A549 (cell line): ENCODE measurements at regions of chr17 and their contacts with region 1.

Region 1: DNA sequence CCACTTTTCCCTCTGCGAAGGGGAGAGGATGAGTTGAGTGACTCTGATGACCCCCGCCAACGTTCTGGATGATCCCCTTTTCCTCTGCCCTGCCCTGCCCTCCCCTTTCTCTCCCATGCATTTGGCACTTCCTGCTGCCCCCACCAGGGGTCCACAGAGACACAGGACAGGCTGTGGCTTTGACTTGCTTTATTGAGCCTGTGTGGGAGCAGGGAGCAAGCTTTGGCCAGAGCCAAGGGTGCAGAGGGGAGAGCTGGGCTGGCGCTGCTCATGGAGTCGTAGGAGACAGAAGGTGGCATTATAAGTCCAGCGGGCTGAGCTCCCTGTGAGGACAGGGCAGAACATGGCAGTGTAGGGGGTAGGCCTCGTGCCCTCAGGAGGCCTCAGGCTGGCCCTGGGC is 1.6 kb downstream of the PPY start:
- DNase-seq: peak; percentile 57 to 58
- ATAC-seq: peak; percentile 54 to 79
- H3K4me3 ChIP-seq: no peak overlapping the region
- H3K27ac ChIP-seq: no peak overlapping the region
- H3K4me1 ChIP-seq: peaks cover 9% of the 10 kb centered on the region; the same call in 2 of the 3 replicates
- CTCF ChIP-seq: peak; percentile 37
- EP300 ChIP-seq: no peak
- POLR2A ChIP-seq: no peak
- RAD21 ChIP-seq: peak; percentile 34 to 56; a peak in 3 of 5 replicates

Region 2: DNA sequence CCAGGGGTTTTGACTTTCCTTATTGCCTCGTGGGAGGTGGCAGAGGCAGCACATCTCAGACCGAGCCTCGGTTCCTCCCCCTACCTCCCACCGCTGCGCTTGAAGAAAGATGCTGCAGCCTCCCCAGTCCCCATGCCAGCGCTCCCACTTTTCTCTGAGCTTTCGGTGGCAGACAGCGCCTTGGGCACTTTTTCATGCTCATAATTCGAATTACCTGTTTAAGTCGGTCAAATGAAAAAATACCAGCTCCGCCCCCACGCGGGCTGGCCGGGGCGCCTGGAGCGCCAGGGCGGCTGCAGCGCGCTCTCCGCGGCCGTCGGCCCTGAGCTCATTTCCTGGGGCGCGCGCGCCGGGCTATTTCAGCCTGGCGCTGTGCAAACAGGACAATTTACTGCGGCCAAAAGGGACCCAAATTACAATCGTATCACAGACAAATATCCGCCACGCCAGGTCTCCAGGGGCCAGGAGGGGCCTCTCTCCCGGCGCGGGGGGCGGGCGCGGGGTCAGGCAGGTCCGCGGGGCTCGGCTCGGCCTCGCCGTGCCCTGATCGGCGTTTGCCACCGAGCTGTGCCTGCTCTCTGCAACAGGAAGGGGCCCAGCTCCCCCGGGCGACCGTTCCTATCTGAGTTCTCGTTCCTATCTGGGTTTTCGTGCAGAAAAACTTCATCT is 227.0 kb before region 1 on chr17:
- CTCF ChIA-PET with region 1: no interaction called
- POLR2A ChIA-PET with region 1: no interaction called
- DNase-seq: peak in 1 of 2 experiments; percentile 76
- ATAC-seq: peak; percentile 78 to 79
- H3K4me3 ChIP-seq: peak overlapping the region; percentile 44
- H3K27ac ChIP-seq: peak overlapping the region; percentile 76 to 85
- H3K4me1 ChIP-seq: peaks cover 29% of the 10 kb centered on the region
- CTCF ChIP-seq: no peak
- EP300 ChIP-seq: no peak
- POLR2A ChIP-seq: peak; percentile 39; the same call in 1 of the 2 replicates
- RAD21 ChIP-seq: no peak

Region 3: DNA sequence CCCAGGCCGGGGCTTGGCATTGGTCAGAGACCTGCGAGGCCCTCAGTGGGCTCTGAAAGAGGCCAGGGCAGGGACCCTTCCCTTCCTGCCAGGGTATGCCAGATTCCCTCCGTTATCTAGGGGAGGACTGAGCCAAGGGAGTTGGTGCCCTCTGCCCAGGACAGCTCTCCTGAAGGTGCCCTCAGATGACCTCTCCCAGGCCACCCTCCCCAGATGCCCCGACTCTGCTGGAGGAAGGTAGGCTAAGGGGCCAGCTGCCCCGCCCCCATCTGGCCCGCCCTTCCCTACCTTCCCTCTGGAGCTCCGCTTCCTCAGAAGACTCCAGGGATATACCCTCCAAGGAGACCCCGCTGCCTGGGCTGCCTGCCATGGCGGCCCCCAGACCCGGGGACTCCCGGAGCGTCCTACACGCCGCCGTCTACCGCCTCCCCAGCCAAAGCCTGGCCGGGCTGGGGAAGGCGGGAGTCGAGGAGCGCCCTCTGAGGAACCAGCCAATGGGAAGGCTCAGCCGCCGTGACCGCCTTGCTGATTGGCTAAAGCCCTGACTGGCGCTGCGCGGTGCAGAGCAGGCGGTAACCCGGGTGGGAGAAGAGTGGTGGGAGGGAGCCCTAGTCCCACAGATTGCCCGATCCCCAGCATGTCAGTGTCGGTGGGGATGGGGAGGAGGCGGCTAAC is 40.3 kb before region 1 on chr17:
- CTCF ChIA-PET with region 1: interaction called, 215 read pairs
- POLR2A ChIA-PET with region 1: no interaction called
- DNase-seq: peak; percentile 88 to 100
- ATAC-seq: peak; percentile 95 to 99
- H3K4me3 ChIP-seq: peak overlapping the region; percentile 55
- H3K27ac ChIP-seq: peak overlapping the region; percentile 76 to 88
- H3K4me1 ChIP-seq: peaks cover 14% of the 10 kb centered on the region
- CTCF ChIP-seq: no peak
- EP300 ChIP-seq: no peak
- POLR2A ChIP-seq: peak; percentile 32; the same call in 1 of the 2 replicates
- RAD21 ChIP-seq: no peak

Region 4: DNA sequence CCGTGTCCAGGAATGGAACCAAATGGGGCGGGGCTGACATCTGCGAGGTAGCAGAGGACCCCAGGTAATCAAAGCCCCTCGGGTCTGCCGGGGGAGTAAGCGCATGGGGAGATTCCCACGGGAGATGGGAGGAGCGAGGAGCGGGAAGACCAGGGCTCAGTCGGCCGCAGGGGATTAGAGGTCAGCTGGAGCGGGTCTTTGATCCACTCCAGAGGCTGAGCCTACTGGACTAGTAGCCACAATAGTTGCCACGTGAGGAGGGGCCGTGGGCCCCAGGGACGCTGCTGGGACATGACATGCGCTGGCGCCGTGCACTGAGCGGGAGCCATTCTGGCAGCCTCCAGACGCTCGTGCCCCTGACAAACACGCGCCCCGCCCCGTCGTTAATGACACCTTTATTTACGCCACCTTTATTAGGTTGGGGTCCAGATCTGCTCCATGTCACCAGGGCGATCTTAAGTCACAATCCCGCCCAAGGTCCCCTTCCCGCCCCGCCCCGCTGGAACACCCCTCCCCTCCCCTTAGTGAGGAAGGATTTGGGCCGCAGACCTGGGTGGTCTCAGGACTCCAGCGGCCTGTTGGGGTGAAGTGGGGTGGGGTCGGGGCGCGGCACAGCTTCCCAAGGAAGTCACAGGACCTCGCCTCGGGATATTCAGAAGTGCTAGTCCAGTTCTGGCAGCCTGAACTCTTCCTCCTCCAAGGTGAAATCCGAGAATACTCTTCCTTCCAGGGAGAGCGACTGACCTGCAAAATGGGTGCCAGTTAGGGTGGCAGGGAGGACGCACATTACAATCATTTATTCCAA is 13.4 kb before region 1 on chr17:
- CTCF ChIA-PET with region 1: interaction called, 43 read pairs
- POLR2A ChIA-PET with region 1: no interaction called
- DNase-seq: no peak
- ATAC-seq: no peak
- H3K4me3 ChIP-seq: no peak overlapping the region
- H3K27ac ChIP-seq: no peak overlapping the region
- H3K4me1 ChIP-seq: peaks cover 14% of the 10 kb centered on the region
- CTCF ChIP-seq: no peak
- EP300 ChIP-seq: no peak
- POLR2A ChIP-seq: no peak
- RAD21 ChIP-seq: no peak

Region 5: DNA sequence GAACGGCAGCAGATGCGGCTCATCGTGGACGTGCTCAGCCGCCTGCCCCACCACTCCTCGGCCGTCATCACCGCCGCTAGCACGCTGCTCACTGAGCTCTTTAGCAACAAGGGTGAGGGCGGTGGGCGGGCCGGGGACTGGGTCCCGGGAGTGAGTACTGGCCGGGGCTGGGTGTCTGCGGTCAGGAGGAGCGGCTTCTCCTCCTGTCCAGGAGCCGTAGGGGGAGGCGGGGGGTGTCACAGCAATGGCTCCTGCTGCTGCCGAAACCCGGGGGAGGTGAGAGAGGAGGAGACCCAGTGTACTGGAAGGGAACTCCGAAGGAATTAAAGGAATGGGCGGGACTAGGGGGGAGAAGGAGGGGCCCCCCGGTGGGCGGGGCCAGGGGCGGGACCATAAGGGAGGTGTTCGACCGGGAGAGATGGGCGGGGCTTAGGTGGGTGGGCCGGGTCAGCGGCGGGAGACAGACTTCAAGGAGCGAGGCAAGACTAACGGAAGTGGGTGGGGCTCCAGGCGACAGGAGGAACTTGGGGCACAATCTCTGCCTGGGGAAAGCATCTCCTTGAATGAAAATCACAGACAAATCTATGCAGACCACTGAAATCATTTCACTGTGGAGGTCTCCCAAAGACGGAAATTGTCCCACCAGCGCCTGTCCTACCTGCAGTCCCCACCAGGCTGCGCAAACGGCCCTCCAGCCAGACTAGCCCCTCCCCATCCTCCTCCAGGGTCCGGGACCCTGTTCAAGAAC is 66.1 kb after region 1 on chr17:
- CTCF ChIA-PET with region 1: interaction called, 657 read pairs
- POLR2A ChIA-PET with region 1: no interaction called
- DNase-seq: peak; percentile 97
- ATAC-seq: peak; percentile 78 to 90
- H3K4me3 ChIP-seq: peak overlapping the region; percentile 51
- H3K27ac ChIP-seq: peak overlapping the region; percentile 67 to 83
- H3K4me1 ChIP-seq: peaks cover 18% of the 10 kb centered on the region
- CTCF ChIP-seq: peak; percentile 37; the same call in 2 of the 3 replicates
- EP300 ChIP-seq: no peak
- POLR2A ChIP-seq: peak; percentile 23
- RAD21 ChIP-seq: peak in 1 of 2 experiments; percentile 33; a peak in 3 of 5 replicates

Region 6: GRCh38 chr17:44044067-44044466 is 103.4 kb after region 1 on chr17:
- CTCF ChIA-PET with region 1: interaction called, 48 read pairs
- POLR2A ChIA-PET with region 1: no interaction called
- DNase-seq: no peak
- ATAC-seq: no peak
- H3K4me3 ChIP-seq: no peak overlapping the region
- H3K27ac ChIP-seq: 0 out of 6 replicates have a peak overlapping the region, but pooled peaks of 1 of the 2 experiments have one; percentile 0
- H3K4me1 ChIP-seq: peaks cover 11% of the 10 kb centered on the region
- CTCF ChIP-seq: no peak
- EP300 ChIP-seq: no peak
- POLR2A ChIP-seq: no peak
- RAD21 ChIP-seq: no peak

Region 7: DNA sequence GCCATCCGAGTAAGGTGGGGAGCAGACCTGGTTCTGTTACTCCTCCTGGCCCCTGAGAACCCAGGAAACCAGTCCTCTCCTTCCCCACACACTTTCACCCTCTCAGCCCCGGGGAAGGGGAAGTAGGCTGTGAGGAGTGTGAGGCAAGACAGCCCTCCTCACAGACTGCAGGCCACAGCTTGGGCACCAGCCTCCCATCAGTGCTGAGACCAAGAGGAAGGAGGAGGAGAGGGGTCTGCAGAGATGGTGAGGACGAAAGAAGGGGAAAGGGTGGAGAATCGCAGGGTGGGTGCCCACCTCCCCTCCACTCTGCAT is 136.9 kb after region 1 on chr17:
- CTCF ChIA-PET with region 1: no interaction called
- POLR2A ChIA-PET with region 1: no interaction called
- DNase-seq: no peak
- ATAC-seq: no peak
- H3K4me3 ChIP-seq: no peak overlapping the region
- H3K27ac ChIP-seq: no peak overlapping the region
- H3K4me1 ChIP-seq: no peaks in the 10 kb centered on the region
- CTCF ChIP-seq: no peak
- EP300 ChIP-seq: no peak
- POLR2A ChIP-seq: no peak
- RAD21 ChIP-seq: no peak